ENCODE measurements at regions of chr15 and their contacts with region 1.

Region 1: GRCh38 chr15:81789403-81789802 is 256.4 kb downstream of the MEX3B start:
- ATAC-seq: no peak
- H3K4me3 ChIP-seq: no peak overlapping the region
- H3K27ac ChIP-seq: no peak overlapping the region
- H3K4me1 ChIP-seq: peaks cover 16 to 19% of the 10 kb centered on the region in 2 donors

Region 2: DNA sequence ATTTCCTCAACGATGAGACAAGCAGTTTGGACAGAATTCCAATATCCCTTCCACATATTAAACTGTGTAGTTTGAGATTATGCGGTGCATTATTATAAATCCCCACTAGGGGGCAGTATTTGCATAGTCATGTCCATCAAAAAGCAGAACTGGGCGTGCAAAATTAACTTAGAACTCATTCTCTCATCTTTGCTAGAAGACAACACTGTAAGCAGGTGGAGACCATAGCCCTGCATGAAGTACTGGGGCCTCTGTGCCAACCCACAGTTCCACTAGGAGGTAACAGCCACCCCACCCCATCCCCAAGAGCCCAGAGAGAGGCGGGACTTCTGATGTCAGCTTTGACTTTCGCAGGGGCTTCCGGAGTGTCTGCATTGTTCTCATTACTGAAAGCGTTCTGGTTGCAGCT is 308.8 kb before region 1 on chr15:
- in situ Hi-C with region 1: loop called in 1 of 9 experiments (anchors 25 kb)
- ATAC-seq: peak; percentile 64 to 90 (median 77)
- H3K4me3 ChIP-seq: no peak overlapping the region
- H3K27ac ChIP-seq: no peak overlapping the region
- H3K4me1 ChIP-seq: peaks cover 3 to 4% of the 10 kb centered on the region in 2 donors

Region 3: GRCh38 chr15:81888748-81889484 is 99.5 kb after region 1 on chr15:
- in situ Hi-C with region 1: loop called in 1 of 9 experiments (anchors 25 kb)
- ATAC-seq: no peak
- H3K4me3 ChIP-seq: no peak overlapping the region
- H3K27ac ChIP-seq: no peak overlapping the region
- H3K4me1 ChIP-seq: peaks cover 4 to 13% of the 10 kb centered on the region in 2 donors

Region 4: DNA sequence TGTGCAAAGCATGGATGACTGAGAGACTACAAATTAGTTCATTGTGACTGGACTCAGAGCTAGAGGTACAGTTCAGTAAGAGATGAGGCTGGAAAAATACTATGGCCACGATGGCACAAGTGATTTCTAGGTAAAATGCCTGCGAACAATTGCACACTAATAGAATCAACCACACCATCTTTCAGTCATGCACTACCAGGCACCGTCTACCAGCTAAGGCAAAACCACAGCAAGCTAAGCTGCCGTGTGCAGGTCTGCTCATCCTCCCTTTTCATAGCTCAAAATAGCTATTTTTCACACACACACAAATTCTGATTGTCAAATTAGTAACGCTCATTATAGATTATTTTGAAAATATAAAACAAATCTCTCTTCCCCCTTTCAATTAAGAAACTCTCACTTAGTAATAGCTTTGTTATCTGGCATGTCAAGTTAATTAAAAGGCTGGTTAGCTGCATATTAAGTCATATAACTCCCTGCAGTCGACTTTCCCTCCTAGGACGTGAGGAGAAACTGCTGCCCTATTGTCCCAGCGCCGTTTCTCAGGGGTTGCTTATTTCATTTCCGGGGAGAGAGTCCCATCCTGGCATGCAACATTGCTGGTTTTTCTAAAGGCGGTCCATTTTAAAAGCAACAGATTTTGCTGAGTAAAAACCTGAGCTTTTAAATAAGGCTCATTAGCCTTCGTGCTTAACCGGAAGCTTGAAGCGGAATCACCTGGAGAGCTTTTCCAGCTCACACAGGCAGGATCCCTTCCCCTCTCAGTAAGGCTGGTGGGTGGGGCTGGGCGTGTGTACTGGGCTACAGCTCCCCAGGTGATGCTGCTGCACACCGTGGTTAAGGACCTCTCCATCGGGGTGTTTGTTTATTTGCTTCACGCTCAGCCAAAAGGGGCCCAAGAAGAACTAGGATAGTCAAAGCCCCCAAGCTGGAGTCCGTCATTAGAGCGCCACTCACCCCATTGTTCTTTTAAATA is 273.4 kb after region 1 on chr15:
- in situ Hi-C with region 1: no loop called
- ATAC-seq: no peak
- H3K4me3 ChIP-seq: no peak overlapping the region
- H3K27ac ChIP-seq: no peak overlapping the region
- H3K4me1 ChIP-seq: peaks cover 0 to 1% of the 10 kb centered on the region in 2 donors